Activated naive CD4-positive, alpha-beta T cell treated with anti-CD3 and anti-CD28 coated beads for 36 hours (primary cell): ENCODE measurements at regions of chr20 and their contacts with region 1.

Region 1: GRCh38 chr20:44960103-44960852 is at the start of gene TOMM34:
- DNase-seq: peak; percentile 96
- H3K4me3 Mint-ChIP-seq: peak within 1 kb of the TSS; percentile 93
- H3K27ac Mint-ChIP-seq: peak within 1 kb of the TSS; percentile 97
- H3K4me1 Mint-ChIP-seq: peaks cover 64% of the 10 kb centered on the region
- H3K27me3 Mint-ChIP-seq: no peaks in the 10 kb centered on the region
- total RNA-seq, gene TOMM34: 44.0 to 45.9 TPM

Region 2: GRCh38 chr20:44566013-44566412 is 394.3 kb before region 1 on chr20:
- CTCF ChIA-PET with region 1: no interaction called
- intact Hi-C with region 1: no loop called
- DNase-seq: no peak
- H3K4me3 Mint-ChIP-seq: no peak overlapping the region
- H3K27ac Mint-ChIP-seq: no peak overlapping the region
- H3K4me1 Mint-ChIP-seq: peaks cover 2% of the 10 kb centered on the region
- H3K27me3 Mint-ChIP-seq: no peaks in the 10 kb centered on the region

Region 3: GRCh38 chr20:44839481-44839880 is 120.8 kb before region 1 on chr20:
- CTCF ChIA-PET with region 1: no interaction called
- intact Hi-C with region 1: no loop called
- DNase-seq: no peak
- H3K4me3 Mint-ChIP-seq: no peak overlapping the region
- H3K27ac Mint-ChIP-seq: no peak overlapping the region
- H3K4me1 Mint-ChIP-seq: no peaks in the 10 kb centered on the region
- H3K27me3 Mint-ChIP-seq: peaks cover 20% of the 10 kb centered on the region

Region 4: GRCh38 chr20:44909872-44910689 is 50.2 kb before region 1 on chr20 and contains the start of gene PABPC1L:
- CTCF ChIA-PET with region 1: no interaction called
- intact Hi-C with region 1: loop called (anchors 1 kb)
- DNase-seq: peak; percentile 81
- H3K4me3 Mint-ChIP-seq: peak within 1 kb of the TSS; percentile 88
- H3K27ac Mint-ChIP-seq: peak within 1 kb of the TSS; percentile 66
- H3K4me1 Mint-ChIP-seq: peaks cover 35% of the 10 kb centered on the region
- H3K27me3 Mint-ChIP-seq: no peaks in the 10 kb centered on the region
- total RNA-seq, gene PABPC1L: 71.0 to 72.8 TPM

Region 5: GRCh38 chr20:45011108-45011526 is 50.8 kb after region 1 on chr20:
- CTCF ChIA-PET with region 1: no interaction called
- intact Hi-C with region 1: no loop called
- DNase-seq: peak; percentile 75
- H3K4me3 Mint-ChIP-seq: no peak overlapping the region
- H3K27ac Mint-ChIP-seq: no peak overlapping the region
- H3K4me1 Mint-ChIP-seq: peaks cover 47% of the 10 kb centered on the region
- H3K27me3 Mint-ChIP-seq: no peaks in the 10 kb centered on the region

Region 6: GRCh38 chr20:45187662-45188061 is 227.4 kb after region 1 on chr20:
- CTCF ChIA-PET with region 1: no interaction called
- intact Hi-C with region 1: no loop called
- DNase-seq: no peak
- H3K4me3 Mint-ChIP-seq: no peak overlapping the region
- H3K27ac Mint-ChIP-seq: no peak overlapping the region
- H3K4me1 Mint-ChIP-seq: no peaks in the 10 kb centered on the region
- H3K27me3 Mint-ChIP-seq: no peaks in the 10 kb centered on the region